OCI-LY7 (cell line): ENCODE measurements at regions of chr17 and their contacts with region 1.

Region 1: GRCh38 chr17:68457539-68458259 is 403 bp upstream of the WIPI1 start:
- DNase-seq: peak; percentile 100
- H3K4me3 ChIP-seq: peak overlapping the region; percentile 67
- H3K27ac ChIP-seq: peak overlapping the region; percentile 83
- H3K4me1 ChIP-seq: peaks cover 73% of the 10 kb centered on the region
- CTCF ChIP-seq: no peak

Region 2: GRCh38 chr17:68184816-68185436 is 272.8 kb before region 1 on chr17:
- CTCF ChIA-PET with region 1: interaction called, 3 read pairs
- POLR2A ChIA-PET with region 1: interaction called, 71 read pairs
- intact Hi-C with region 1: loop called (anchors 1 kb)
- DNase-seq: peak; percentile 65
- H3K4me3 ChIP-seq: peak overlapping the region; percentile 75
- H3K27ac ChIP-seq: peak overlapping the region; percentile 90
- H3K4me1 ChIP-seq: peaks cover 33% of the 10 kb centered on the region
- CTCF ChIP-seq: no peak

Region 3: DNA sequence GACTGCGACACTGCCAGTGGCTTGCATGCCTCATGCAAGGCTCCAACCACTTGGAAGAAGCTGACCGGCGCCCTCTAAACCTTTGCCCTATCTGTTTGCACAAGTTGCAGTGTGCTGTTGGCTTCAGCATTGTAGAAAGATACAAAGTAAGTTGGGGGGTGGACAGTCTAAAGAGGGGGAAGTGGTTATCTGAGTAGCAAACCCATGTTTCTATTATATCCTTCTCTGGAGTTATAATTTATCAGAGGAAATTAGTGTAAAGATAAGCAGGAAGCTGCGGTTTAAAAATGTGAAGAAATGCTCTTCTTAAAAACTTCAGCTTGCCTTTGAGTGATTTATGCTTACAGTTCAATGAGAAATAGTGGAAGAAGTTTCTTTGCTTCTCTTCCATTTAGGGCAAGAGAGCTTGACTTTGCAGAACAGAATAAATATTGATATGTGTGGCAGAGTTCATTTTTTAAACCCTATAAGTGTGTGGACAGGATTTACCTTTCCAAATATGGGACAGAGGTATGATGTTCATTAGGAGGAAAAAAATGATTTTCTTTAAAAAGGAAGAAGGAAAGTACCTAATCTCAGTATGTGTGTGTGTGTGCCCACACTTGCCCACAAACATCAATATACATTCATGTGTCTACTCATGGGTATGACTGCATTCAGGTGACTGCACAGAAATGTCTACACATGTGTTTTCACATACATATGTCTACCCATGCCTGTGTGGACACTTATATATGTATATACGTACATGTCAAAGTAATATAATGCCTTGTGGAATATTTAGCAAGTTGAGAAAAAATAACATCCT is 201.8 kb before region 1 on chr17:
- CTCF ChIA-PET with region 1: no interaction called
- POLR2A ChIA-PET with region 1: interaction called, 35 read pairs
- intact Hi-C with region 1: no loop called
- DNase-seq: peak; percentile 56
- H3K4me3 ChIP-seq: peak overlapping the region; percentile 54
- H3K27ac ChIP-seq: peak overlapping the region; percentile 90
- H3K4me1 ChIP-seq: peaks cover 98% of the 10 kb centered on the region
- CTCF ChIP-seq: no peak

Region 4: DNA sequence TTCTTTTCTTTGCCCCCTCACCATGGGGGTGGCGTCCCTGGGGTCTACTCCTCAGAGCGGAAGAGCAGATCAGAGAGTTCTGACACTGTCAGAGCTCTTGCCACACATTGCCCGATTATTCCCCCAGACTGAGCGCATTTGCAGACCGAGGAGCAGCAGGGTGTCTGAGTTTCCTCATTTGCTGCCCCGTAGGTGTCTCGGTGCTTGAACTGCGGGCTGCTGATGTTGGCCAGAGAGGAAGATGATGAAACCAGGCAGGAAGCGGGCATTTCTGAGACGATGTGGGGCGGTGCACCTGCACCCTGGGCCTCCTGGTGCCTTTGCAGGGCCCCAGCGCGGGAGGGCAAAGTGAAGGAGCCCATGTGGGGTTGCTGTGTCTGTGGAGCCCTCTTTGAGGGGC is 111.3 kb before region 1 on chr17:
- CTCF ChIA-PET with region 1: no interaction called
- POLR2A ChIA-PET with region 1: interaction called, 15 read pairs
- intact Hi-C with region 1: no loop called
- DNase-seq: peak; percentile 99
- H3K4me3 ChIP-seq: peak overlapping the region; percentile 51
- H3K27ac ChIP-seq: peak overlapping the region; percentile 95
- H3K4me1 ChIP-seq: peaks cover 48% of the 10 kb centered on the region
- CTCF ChIP-seq: no peak; the same call in 1 of the 2 replicates

Region 5: GRCh38 chr17:68441064-68441770 is 16.5 kb before region 1 on chr17:
- CTCF ChIA-PET with region 1: interaction called, 8 read pairs
- POLR2A ChIA-PET with region 1: interaction called, 138 read pairs
- intact Hi-C with region 1: loop called (anchors 1 kb)
- DNase-seq: peak; percentile 70
- H3K4me3 ChIP-seq: peak overlapping the region; percentile 14
- H3K27ac ChIP-seq: peak overlapping the region; percentile 80
- H3K4me1 ChIP-seq: peaks cover 63% of the 10 kb centered on the region
- CTCF ChIP-seq: no peak

Region 6: GRCh38 chr17:68468334-68468733 is 10.6 kb after region 1 on chr17:
- CTCF ChIA-PET with region 1: interaction called, 3 read pairs
- POLR2A ChIA-PET with region 1: interaction called, 21 read pairs
- intact Hi-C with region 1: no loop called
- DNase-seq: no peak
- H3K4me3 ChIP-seq: no peak overlapping the region
- H3K27ac ChIP-seq: no peak overlapping the region
- H3K4me1 ChIP-seq: peaks cover 15% of the 10 kb centered on the region
- CTCF ChIP-seq: no peak

Region 7: DNA sequence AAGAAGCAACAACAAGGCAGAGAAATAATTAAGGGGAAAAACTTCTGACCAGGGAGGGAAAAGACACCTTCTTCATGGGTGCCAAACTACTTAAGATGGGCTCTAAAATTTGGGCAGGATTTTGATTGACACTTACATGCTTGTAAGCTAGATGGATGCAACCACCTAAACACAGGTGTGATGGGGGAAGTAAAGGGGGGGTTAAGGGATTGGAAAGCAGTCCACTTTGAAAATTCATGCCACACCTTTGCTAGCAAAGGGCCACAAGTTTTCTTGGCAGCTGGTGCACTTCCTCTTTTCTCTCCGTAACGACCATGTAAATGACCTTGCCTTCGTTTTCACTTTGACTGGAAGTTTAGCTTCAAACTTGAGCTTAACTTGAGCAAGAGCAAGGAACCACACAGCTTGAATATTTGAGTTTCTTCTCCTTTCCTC is 40.2 kb after region 1 on chr17:
- CTCF ChIA-PET with region 1: no interaction called
- POLR2A ChIA-PET with region 1: interaction called, 18 read pairs
- intact Hi-C with region 1: no loop called
- DNase-seq: peak; percentile 99
- H3K4me3 ChIP-seq: peak overlapping the region; percentile 56
- H3K27ac ChIP-seq: peak overlapping the region; percentile 95
- H3K4me1 ChIP-seq: peaks cover 57% of the 10 kb centered on the region
- CTCF ChIP-seq: no peak